ENCODE measurements at regions of chr17 and their contacts with region 1.

Region 1: GRCh38 chr17:64420143-64420971 is 28.6 kb upstream of the MILR1 start:
- DNase-seq: no peak
- H3K4me3 ChIP-seq: no peak overlapping the region
- H3K27ac ChIP-seq: no peak overlapping the region
- H3K4me1 ChIP-seq: no peaks in the 10 kb centered on the region
- H3K27me3 ChIP-seq: no peaks in the 10 kb centered on the region
- CTCF ChIP-seq: peak; percentile 56 to 78 (median 60)
- EP300 ChIP-seq: no peak
- POLR2A ChIP-seq: no peak

Region 2: DNA sequence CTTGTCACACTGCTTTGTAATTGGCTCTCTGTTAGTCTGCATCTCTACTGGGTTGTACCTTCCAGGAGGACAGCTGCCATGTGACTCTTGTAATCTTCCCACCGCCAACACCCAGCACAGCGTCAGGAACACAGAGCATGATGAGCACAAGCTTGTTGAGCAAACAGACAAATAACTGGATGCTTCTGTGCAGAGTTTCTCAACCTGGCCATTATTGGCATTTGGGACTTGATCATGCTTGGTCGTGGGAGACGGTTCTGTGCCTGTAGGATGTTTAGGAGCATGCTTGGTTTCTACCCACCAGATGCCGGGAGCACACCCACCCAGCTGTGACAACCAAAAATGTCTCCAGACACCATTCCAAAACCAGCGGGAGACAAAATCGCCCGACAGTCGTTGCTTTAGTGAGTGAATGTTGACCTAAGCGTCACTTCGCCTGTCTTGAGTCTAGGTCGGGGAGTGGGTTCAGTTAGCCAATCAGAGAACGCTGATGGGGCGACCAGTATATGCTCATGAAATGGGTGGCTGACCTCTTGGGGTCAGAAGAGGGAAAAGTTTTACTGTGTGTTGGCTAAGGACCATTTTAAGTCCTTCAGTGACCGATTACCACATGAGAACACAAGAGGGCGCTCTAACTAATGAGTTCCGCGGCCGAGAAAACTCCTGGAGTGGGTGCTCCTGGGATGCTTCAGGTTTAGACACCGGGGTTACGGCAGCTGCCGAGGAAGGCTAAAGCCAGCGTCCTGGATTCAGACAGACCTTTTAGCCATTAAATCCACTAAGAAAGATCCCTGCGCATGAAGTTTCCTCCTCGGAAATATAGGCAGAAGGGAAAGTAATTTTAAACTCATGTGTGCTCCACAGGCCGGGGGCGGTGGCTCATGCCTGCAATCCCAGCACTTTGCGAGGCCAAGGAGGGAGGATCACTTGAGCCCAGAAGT is 99.5 kb before region 1 on chr17:
- intact Hi-C with region 1: loop called in 3 of 4 experiments (anchors 2 kb)
- DNase-seq: peak; percentile 63 to 85 (median 68)
- H3K4me3 ChIP-seq: no peak overlapping the region
- H3K27ac ChIP-seq: no peak overlapping the region
- H3K4me1 ChIP-seq: peaks cover 3% of the 10 kb centered on the region
- H3K27me3 ChIP-seq: no peaks in the 10 kb centered on the region
- CTCF ChIP-seq: peak; percentile 81 to 93 (median 82)
- EP300 ChIP-seq: no peak
- POLR2A ChIP-seq: no peak

Region 3: GRCh38 chr17:64496786-64497564 is 76.6 kb after region 1 on chr17 and contains the start of gene POLG2:
- intact Hi-C with region 1: loop called in 1 of 4 experiments (anchors 10 kb)
- DNase-seq: peak; percentile 88 to 94 (median 89)
- H3K4me3 ChIP-seq: peak within 1 kb of the TSS; percentile 52
- H3K27ac ChIP-seq: peak within 1 kb of the TSS; percentile 17 to 64
- H3K4me1 ChIP-seq: peaks cover 6% of the 10 kb centered on the region
- H3K27me3 ChIP-seq: no peaks in the 10 kb centered on the region
- CTCF ChIP-seq: peak in 2 of 3 donors; percentile 46 to 52
- EP300 ChIP-seq: no peak
- POLR2A ChIP-seq: peak; percentile 6
- total RNA-seq, gene POLG2: 13.6 to 21.3 (median 17.6) TPM

Region 4: GRCh38 chr17:64599187-64599676 is 178.9 kb after region 1 on chr17:
- intact Hi-C with region 1: loop called in 1 of 4 experiments (anchors 5 kb)
- DNase-seq: no peak
- H3K4me3 ChIP-seq: no peak overlapping the region
- H3K27ac ChIP-seq: no peak overlapping the region
- H3K4me1 ChIP-seq: no peaks in the 10 kb centered on the region
- H3K27me3 ChIP-seq: no peaks in the 10 kb centered on the region
- CTCF ChIP-seq: no peak
- EP300 ChIP-seq: no peak
- POLR2A ChIP-seq: no peak

Region 5: GRCh38 chr17:65442250-65442649 is 1021.9 kb after region 1 on chr17:
- intact Hi-C with region 1: loop called in 1 of 4 experiments (anchors 5 kb)
- DNase-seq: no peak
- H3K4me3 ChIP-seq: no peak overlapping the region
- H3K27ac ChIP-seq: no peak overlapping the region
- H3K4me1 ChIP-seq: no peaks in the 10 kb centered on the region
- H3K27me3 ChIP-seq: no peaks in the 10 kb centered on the region
- CTCF ChIP-seq: no peak
- EP300 ChIP-seq: no peak
- POLR2A ChIP-seq: no peak